Panc1 (cell line): ENCODE measurements at regions of chr11 and their contacts with region 1.

Region 1: DNA sequence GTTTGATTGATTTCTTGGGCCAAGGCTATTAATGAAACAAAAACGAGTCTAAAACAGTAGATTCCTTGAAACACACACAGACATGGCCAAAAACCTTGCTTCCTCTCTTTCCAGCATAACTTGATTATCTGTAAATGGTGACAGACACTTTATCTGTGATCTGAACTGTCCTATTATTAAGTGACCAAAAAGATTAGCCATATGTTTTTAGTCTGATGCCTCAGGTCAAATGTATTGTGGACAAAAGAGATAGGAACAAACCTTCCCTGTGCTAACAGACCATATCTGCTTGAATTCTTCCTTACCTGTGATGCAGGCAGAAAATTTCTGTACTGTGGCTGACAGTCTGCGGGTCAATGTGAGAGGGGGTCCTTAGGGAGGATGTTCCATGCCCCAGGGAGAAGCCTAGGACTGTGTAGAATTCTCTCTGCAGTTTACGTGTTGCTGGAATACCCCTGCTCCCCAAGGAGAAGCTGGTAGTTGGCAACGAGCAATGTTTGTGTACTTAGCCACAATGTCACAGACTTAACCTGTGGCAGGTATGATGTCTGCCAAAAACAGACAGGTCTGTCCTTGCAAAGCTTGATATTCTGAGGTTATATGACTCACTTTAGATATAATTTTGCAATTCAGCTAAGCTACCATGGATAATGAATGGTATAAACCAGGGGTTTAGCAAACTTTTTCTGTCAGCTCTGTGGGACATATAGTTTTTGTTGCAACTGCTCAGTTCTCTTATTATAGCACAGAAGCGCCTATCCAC is 31.2 kb downstream of the C11orf71 start:
- DNase-seq: no peak
- ATAC-seq: no peak
- H3K4me3 ChIP-seq: no peak overlapping the region
- H3K27ac ChIP-seq: no peak overlapping the region
- H3K4me1 ChIP-seq: no peaks in the 10 kb centered on the region
- H3K27me3 ChIP-seq: peaks cover 32% of the 10 kb centered on the region
- CTCF ChIP-seq: no peak

Region 2: DNA sequence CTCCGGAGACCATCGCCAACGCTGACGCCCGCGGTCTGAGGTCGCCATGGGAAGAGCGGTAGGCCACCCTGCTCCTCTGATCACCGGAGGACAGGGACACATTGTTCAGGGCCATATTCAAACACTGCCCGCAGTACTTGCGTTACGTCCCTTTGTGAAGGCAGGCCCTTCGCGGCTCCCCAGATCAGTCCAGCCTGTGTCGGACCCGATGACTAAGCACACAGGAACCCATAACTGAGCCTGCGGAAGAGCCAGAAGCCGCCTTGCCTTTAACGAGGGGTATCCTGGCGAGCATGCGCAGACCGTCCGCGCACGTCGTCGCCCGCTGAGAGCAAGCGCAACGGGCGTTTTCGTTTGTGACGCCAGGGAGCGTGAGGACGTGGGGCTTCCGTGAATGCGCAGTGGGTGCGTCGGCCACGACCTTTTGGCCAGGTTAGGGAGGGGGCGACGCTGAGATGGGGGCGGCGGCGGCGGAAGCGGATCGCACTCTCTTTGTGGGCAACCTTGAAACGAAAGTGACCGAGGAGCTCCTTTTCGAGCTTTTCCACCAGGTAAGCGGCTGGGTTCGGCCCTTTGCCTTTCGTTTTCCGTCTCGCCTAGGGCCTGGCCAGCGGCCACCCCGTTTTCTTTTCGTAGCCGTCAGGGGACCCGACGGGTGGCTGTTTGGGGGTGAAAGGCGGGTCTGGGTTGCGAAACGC is 31.3 kb after region 1 on chr11 and contains the starts of genes C11orf71 and RBM7:
- CTCF ChIA-PET with region 1: no interaction called
- POLR2A ChIA-PET with region 1: interaction called, 14 read pairs
- in situ Hi-C with region 1: no loop called
- intact Hi-C with region 1: no loop called
- DNase-seq: peak; percentile 92
- ATAC-seq: peak; percentile 98
- H3K4me3 ChIP-seq: peak within 1 kb of the TSS; percentile 73 to 96
- H3K27ac ChIP-seq: peak within 1 kb of the TSS; percentile 100
- H3K4me1 ChIP-seq: peaks cover 17% of the 10 kb centered on the region; the same call in 1 of the 2 replicates
- H3K27me3 ChIP-seq: no peaks in the 10 kb centered on the region
- CTCF ChIP-seq: no peak
- total RNA-seq, gene C11orf71: 6.2 TPM
- total RNA-seq, gene RBM7: 35.2 TPM